ENCODE measurements at regions of chr1 and their contacts with region 1.

Region 1: GRCh38 chr1:233730809-233731208 is 116.9 kb downstream of the KCNK1 start:
- DNase-seq: peak in 1 of 5 donors; percentile 43
- ATAC-seq: peak in 2 of 4 donors; percentile 22 to 42
- H3K4me3 ChIP-seq: no peak overlapping the region
- H3K27ac ChIP-seq: no peak overlapping the region
- H3K4me1 ChIP-seq: peaks cover 0 to 6% (median 0%) of the 10 kb centered on the region in 12 donors
- H3K27me3 ChIP-seq: no peaks in the 10 kb centered on the region
- CTCF ChIP-seq: peak in 1 of 12 donors; percentile 4
- POLR2A ChIP-seq: no peak

Region 2: GRCh38 chr1:233627376-233627775 is 103.4 kb before region 1 on chr1:
- intact Hi-C with region 1: no loop called
- DNase-seq: no peak
- ATAC-seq: no peak
- H3K4me3 ChIP-seq: no peak overlapping the region
- H3K27ac ChIP-seq: no peak overlapping the region
- H3K4me1 ChIP-seq: no peaks in the 10 kb centered on the region
- H3K27me3 ChIP-seq: no peaks in the 10 kb centered on the region
- CTCF ChIP-seq: no peak
- POLR2A ChIP-seq: no peak

Region 3: GRCh38 chr1:233695901-233696300 is 34.9 kb before region 1 on chr1:
- intact Hi-C with region 1: loop called in 1 of 10 experiments (anchors 2 kb)
- DNase-seq: no peak
- ATAC-seq: no peak
- H3K4me3 ChIP-seq: peak overlapping the region in 1 of 12 donors; percentile 41
- H3K27ac ChIP-seq: peak overlapping the region in 1 of 12 donors; percentile 91
- H3K4me1 ChIP-seq: peaks cover 0 to 12% (median 0%) of the 10 kb centered on the region in 12 donors
- H3K27me3 ChIP-seq: no peaks in the 10 kb centered on the region
- CTCF ChIP-seq: no peak
- POLR2A ChIP-seq: no peak

Region 4: DNA sequence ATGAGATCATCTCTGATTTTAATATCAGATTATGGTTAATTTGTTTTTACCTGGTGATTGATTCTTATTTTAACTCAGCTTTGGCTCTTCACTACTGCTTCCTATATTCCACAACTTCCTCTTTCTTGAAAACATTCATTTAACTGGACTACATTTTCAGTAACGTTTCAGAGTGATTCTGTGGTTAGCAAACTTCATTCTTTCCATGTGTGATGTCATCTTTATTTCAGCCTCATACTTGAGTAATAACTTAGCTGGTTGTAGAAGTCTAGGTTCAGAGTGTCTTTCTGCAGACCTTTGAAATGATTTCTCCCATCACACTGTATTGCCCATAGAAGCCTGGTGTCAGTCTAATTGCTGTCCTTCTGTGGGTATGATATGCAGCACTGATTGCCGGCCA is 137.7 kb after region 1 on chr1:
- intact Hi-C with region 1: no loop called
- DNase-seq: no peak
- ATAC-seq: no peak
- H3K4me3 ChIP-seq: no peak overlapping the region
- H3K27ac ChIP-seq: no peak overlapping the region
- H3K4me1 ChIP-seq: no peaks in the 10 kb centered on the region
- H3K27me3 ChIP-seq: no peaks in the 10 kb centered on the region
- CTCF ChIP-seq: no peak
- POLR2A ChIP-seq: no peak